ENCODE measurements at regions of chr15 and their contacts with region 1.

Region 1: GRCh38 chr15:94163999-94164807 is 67.2 kb upstream of the MCTP2 start:
- DNase-seq: peak; percentile 71 to 87 (median 79)
- H3K4me3 ChIP-seq: no peak overlapping the region
- H3K27ac ChIP-seq: no peak overlapping the region
- H3K4me1 ChIP-seq: peaks cover 0 to 8% (median 7%) of the 10 kb centered on the region in 4 experiments
- H3K27me3 ChIP-seq: no peaks in the 10 kb centered on the region

Region 2: GRCh38 chr15:93942269-93942694 is 221.9 kb before region 1 on chr15:
- CTCF ChIA-PET with region 1: no interaction called
- POLR2A ChIA-PET with region 1: no interaction called
- DNase-seq: peak in 1 of 3 donors; percentile 10
- H3K4me3 ChIP-seq: no peak overlapping the region
- H3K27ac ChIP-seq: no peak overlapping the region
- H3K4me1 ChIP-seq: no peaks in the 10 kb centered on the region
- H3K27me3 ChIP-seq: peaks cover 0 to 6% (median 0%) of the 10 kb centered on the region in 5 experiments

Region 3: DNA sequence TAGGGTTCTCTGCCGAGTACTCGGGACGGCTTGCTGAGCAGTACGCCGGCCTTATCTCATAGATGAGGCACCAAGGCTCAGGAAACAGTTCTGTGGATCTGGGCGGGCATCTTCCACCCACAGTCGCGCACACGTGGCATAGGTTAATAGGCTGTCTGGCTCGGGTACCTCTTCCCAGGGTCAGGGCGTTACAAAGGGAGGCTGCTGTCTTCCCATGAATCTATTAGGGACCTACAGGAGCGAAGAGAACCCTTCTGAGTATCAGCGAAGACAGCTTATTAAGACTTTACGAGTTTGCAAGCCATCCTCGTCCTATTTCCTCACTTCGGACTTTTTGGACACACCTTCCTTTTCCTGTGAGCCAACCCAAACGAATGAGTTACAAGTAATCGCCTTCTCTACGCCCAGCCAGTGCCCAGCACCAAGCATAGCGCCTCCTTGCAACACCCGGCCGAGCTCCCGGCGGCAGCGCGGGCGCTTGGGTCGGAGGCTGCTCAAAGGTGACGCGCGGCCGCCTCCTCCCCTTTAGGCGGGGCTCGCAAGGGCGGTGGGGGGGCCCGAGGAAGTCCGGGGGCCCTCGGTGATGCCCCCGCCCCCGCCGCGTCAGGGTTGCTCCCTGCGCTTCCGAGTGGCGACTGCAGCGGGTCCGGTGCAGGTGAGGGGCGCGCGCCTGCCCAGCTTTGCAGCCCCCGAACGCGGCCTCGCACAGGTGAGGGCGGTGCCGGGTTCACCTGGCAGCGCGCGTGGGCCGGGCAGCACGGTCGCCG is 66.9 kb after region 1 on chr15 and contains the start of gene MCTP2:
- CTCF ChIA-PET with region 1: interaction called, 18 read pairs
- POLR2A ChIA-PET with region 1: interaction called, 3 read pairs
- DNase-seq: peak; percentile 92 to 97 (median 96)
- H3K4me3 ChIP-seq: peak within 1 kb of the TSS; percentile 87 to 96 (median 90)
- H3K27ac ChIP-seq: peak within 1 kb of the TSS; percentile 84 to 93
- H3K4me1 ChIP-seq: peaks cover 37 to 66% (median 58%) of the 10 kb centered on the region in 4 experiments
- H3K27me3 ChIP-seq: no peaks in the 10 kb centered on the region

Region 4: DNA sequence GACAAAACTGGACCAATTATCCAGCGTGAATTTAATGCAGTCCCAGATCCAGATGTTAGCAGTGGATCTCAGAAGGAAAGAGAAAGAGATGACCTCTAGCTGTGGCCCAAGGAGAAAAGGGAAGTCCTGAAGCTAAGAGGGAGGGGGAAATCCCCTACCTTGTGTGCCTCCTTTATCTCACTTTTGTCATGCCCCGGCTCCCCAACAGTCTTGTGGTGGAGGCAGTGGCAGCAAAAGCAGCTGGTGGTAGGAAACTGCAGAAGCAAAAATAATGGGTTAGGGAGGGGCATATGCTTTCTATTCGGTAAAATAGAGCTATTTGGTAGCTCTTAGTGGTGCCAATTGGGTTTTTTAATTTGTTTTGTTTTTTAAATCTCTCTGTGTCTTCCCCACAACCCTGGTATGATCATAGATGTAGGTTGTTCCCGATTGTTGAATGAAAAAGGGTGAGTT is 123.6 kb after region 1 on chr15:
- CTCF ChIA-PET with region 1: interaction called, 36 read pairs
- POLR2A ChIA-PET with region 1: no interaction called
- DNase-seq: peak; percentile 91 to 99 (median 97)
- H3K4me3 ChIP-seq: peak overlapping the region in 6 of 7 experiments; percentile 32 to 70 (median 44)
- H3K27ac ChIP-seq: peak overlapping the region; percentile 76 to 91
- H3K4me1 ChIP-seq: peaks cover 42 to 71% (median 52%) of the 10 kb centered on the region in 4 experiments
- H3K27me3 ChIP-seq: no peaks in the 10 kb centered on the region

Region 5: DNA sequence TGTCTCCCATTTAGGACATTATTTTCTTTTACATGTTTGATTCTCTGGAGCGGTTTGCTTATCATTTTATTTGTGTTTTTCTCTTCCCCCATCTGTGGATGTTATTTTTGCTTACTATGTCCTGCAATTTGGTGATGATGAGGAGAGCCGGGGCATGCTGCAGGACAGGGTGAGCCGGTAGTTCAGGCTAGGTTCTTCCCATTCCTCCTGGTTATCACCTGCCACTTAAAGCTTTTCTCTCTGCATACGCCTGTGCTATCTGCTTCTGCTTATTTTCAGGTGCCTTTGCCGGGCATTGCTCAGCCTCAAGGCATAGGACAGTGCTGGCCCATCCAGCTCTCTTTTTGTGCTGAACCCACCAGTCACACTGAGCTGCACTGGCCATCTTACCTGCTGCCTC is 153.0 kb after region 1 on chr15:
- CTCF ChIA-PET with region 1: interaction called, 222 read pairs
- POLR2A ChIA-PET with region 1: no interaction called
- DNase-seq: no peak
- H3K4me3 ChIP-seq: no peak overlapping the region
- H3K27ac ChIP-seq: no peak overlapping the region
- H3K4me1 ChIP-seq: peaks cover 0 to 17% (median 8%) of the 10 kb centered on the region in 4 experiments
- H3K27me3 ChIP-seq: no peaks in the 10 kb centered on the region